Activated naive CD8-positive, alpha-beta T cell treated with anti-CD3 and anti-CD28 coated beads, Interleukin-2, amount 10 ng/mL, durations not matched to agents 7 days and 5 days (primary cell): ENCODE measurements at regions of chr19 and their contacts with region 1.

Region 1: DNA sequence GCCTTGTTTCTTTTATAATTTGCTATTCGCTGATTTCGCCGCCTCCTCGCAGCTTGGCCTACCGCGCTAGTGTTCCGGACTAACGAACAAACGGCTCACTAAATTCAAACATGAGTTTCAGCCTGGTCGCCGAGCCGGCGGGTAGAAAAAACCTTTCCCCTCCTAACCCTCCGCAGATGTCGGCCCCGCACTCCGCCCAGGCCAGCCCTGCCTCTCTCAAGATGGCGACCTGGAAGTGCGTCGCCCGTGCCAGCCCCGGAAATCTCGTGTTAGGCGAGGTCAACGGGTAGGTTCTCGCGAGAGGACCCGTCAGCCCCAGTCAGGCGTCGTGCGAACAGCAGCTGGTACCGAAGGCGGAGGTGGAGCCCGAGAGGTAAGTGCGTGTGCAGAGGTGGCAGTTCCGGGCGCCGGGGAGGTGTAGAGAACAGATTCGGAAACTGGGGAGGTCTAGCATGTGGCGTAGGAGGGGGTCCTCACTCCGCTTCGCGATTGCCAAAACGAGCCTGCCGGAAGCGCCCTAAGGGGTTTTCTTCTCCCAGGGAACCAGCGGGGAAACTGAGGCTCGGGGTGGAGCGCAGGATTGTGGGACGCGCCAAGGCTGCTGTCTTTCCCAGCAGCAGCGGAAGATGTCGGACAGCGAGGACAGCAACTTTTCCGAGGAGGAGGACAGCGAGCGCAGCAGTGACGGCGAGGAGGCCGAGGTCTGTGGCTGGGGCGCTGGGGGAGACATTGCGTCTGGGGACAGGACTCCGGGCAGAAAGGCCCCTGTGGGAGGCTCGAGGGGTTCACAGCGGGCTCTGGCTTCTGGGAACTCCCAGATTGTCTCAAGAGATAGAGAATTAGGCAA is at the start of gene SUPT5H:
- DNase-seq: peak; percentile 94
- ATAC-seq: peak; percentile 96
- H3K4me3 Mint-ChIP-seq: peak within 1 kb of the TSS; percentile 91
- H3K27ac Mint-ChIP-seq: peak within 1 kb of the TSS; percentile 96
- H3K4me1 Mint-ChIP-seq: peaks cover 42% of the 10 kb centered on the region
- H3K27me3 Mint-ChIP-seq: peaks cover 2% of the 10 kb centered on the region
- total RNA-seq, gene SUPT5H: 173 to 176 TPM

Region 2: DNA sequence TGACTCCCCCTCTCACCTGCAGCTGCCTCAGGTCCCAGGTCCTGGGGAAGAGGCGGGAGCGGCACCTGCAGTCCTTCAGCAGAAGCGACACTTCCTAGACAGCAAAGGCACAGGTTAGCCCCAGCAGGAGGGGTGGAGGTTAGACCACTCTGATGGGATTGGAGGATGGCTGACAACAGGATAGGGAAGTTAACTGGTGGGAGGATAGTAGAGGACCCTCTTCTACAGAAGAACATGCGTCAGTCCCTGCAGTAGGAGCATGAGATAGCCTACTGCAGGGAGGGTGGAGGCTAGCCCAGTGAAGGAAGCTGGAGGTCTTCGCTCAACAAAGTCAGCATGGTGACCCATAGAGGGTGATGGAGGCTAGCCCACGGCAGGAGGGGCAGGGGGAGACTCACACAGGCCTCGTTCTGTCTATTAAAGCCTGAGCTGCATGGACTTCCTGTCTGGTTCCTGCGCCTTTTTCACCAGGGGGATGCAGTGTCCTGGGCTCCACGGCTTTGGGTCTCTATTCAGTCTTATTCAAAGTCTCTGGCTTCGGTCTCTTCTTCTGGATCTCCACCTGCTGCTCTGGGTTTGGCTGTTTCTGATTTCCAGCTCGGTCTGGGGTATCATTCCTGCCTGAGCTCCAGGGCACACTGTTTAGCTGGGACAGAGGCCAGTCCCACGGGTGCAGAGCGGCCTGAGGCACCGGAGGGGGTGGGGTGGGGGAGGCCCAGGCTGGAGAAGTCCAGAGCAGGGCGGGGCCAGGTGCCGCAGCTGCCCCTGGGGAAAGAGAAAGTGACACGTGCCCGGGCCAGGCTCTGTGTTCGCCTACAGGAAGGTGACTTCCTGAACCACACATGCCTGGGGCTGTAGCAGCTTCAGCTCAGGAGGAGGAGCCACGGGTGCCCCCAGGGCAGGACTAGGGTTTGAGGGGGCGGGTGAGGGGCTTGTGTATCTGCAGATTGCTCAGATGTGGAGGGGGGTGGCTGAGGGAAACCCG is 208.0 kb before region 1 on chr19:
- POLR2A ChIA-PET with region 1: interaction called, 14 read pairs
- DNase-seq: peak; percentile 59
- ATAC-seq: peak; percentile 62
- H3K4me3 Mint-ChIP-seq: peak overlapping the region; percentile 79
- H3K27ac Mint-ChIP-seq: peak overlapping the region; percentile 85
- H3K4me1 Mint-ChIP-seq: peaks cover 27% of the 10 kb centered on the region
- H3K27me3 Mint-ChIP-seq: no peaks in the 10 kb centered on the region

Region 3: DNA sequence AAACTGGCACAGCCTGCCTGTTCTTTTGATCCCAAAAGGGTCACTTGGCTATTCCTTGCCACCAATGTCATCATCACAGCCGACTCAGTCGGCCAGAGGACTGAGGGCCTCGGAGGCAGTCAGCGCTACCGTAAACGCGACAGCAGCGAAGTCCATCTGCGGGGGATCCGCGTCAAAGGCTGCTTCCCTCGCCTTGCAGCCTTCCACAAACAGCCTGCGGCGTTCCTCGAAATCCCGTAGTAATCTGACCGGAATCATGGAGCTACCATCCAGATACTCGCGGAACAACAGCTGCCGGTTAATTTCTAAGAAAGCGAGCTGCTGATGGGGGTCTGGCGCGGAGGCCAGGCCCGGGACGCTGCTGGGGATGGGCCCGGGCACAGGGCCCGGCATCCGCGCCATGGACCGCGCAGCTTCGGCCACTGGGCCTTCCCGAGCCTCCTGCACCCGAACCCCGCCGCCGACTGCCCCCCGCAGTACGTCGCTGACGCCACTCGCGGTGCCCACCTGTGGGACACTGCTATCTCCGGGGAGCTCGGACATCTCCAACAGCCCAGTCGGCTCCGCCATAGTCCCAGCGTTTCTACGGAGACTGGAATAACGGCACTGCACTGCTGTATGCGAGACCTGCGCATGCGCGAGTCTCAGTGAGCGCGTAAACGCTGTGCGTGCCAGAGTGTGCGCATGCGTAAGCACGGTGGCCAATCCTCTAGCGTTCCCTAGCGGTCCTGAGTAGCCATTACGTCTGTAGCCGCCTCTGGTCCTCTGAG is 86.9 kb after region 1 on chr19 and contains the start of gene EID2B:
- POLR2A ChIA-PET with region 1: interaction called, 12 read pairs
- DNase-seq: peak; percentile 96
- ATAC-seq: peak; percentile 94
- H3K4me3 Mint-ChIP-seq: peak within 1 kb of the TSS; percentile 92
- H3K27ac Mint-ChIP-seq: peak within 1 kb of the TSS; percentile 82
- H3K4me1 Mint-ChIP-seq: peaks cover 12% of the 10 kb centered on the region
- H3K27me3 Mint-ChIP-seq: no peaks in the 10 kb centered on the region
- total RNA-seq, gene EID2B: 6.3 to 7.0 TPM